ENCODE measurements at regions of chr10 and their contacts with region 1.

Region 1: DNA sequence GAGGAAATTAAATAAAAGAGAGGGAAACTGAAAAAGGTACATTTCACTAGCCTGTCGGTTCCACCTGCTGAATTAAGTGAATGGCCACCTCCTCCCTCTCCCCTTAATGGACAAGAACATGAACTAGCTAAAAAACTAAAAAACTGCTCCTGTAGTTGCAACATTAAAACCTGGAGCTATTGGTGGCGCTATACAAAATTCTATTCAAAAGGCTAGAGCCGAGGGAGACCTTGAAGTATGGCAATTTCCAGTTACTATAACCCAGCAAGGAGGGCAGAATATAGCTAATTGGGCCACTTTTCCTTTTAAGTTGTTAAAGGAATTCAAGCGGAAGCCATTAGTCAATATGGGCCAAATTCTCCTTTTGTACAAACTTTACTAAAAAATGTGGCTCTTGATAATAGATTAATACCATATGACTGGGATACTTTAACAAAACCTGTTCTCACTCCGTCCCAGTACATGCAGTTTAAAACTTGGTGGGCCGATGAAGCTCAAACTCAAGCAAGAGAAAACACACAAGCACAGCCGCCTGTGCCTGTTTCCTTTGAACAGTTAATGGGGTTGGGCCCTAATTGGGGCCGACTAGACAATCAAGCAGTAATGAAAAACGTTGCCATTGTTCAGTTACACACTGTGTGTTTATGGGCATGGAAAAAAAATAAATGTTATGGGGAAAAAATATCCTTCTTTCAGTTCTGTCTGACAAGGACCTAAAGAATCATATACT is 6.5 kb upstream of the CHST3 start:
- DNase-seq: no peak
- ATAC-seq: no peak
- H3K4me3 Mint-ChIP-seq: no peak overlapping the region
- H3K27ac Mint-ChIP-seq: no peak overlapping the region
- H3K4me1 Mint-ChIP-seq: peaks cover 4% of the 10 kb centered on the region
- H3K27me3 Mint-ChIP-seq: peaks cover 13% of the 10 kb centered on the region

Region 2: DNA sequence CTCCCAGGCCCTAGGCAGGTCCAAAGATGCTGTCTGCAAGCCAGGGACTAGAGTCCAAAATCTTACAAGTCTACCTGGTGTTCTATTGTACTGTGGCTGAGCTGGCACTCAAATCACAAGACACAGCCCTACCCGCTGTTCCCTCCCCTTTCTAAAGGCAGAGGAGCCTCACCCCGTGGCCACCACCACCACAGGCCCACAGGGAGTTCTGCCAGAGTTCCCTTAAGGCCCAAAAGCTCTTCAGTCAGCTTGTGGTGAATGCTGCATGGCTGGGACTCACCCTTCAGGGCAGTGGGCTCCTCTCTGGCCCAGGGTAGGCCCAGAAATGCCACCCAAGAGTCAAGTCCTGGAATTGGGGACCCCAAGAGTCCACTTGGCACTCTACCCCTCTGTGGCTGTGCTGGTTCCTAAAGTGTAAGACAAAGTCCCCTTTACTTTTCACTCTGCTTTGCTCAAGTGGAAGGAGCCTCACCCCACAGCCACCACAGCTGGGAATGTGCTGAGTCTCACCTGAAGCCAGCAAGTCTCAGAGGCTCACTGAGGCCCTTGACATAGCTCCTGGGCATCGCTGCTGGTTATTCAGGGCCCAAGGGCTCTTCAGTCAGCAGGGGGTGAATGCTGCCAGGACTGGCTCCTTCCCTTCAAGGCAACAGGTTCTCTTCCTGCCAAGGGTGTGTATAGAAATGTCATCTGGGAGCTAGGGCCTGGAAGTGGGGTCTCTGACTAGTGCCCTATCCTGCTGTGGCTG is 57.9 kb before region 1 on chr10:
- CTCF ChIA-PET with region 1: interaction called, 21 read pairs
- POLR2A ChIA-PET with region 1: no interaction called
- intact Hi-C with region 1: no loop called
- DNase-seq: no peak
- ATAC-seq: no peak
- H3K4me3 Mint-ChIP-seq: no peak overlapping the region
- H3K27ac Mint-ChIP-seq: no peak overlapping the region
- H3K4me1 Mint-ChIP-seq: no peaks in the 10 kb centered on the region
- H3K27me3 Mint-ChIP-seq: no peaks in the 10 kb centered on the region

Region 3: DNA sequence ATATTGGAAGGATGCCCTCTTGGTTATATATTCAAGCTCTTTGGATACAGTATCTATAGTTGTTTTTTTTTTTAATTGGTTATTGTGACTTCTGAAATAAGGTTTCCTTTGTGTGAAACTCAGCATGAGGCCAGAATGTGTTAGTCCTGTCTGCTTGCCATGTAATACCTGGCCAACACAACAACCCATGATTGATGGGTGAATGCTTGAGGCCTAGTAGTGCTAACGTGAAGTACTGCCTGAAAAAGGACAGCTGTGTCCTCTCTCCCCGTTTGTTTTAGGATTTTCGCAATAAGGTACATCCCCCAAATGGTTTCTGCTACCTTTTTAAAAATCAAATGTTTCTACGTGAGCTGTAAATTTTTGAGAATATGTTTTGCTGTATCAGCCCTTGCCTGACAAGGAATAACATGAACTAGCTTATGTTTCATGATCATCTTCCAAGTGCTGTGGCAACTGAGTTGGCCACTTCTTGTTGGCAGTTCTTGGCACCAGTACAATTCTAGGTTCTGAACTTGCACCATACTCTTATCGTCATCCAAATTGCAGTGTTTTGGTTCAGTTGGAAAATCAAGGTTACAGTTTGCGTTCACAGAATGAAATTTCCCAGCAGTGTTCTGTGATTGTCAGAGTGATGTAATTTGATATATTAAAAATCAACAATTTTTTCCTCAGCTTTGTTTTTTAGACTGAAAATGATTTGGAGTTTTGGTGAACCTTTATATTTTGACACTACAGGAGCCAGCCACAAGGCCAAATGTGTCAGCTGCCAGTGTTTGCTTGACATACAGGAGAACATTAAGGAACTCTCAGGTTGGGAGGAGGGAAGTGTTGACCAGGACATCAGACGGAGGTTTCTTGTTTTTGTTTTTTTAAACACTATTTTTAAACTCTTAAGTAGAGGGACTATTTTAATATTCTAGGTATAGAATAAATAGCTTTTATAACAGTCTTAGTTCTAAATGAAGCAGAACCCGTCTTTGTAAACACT is 271.8 kb after region 1 on chr10:
- CTCF ChIA-PET with region 1: no interaction called
- POLR2A ChIA-PET with region 1: no interaction called
- intact Hi-C with region 1: loop called in 1 of 2 experiments (anchors 5 kb)
- DNase-seq: no peak
- ATAC-seq: no peak
- H3K4me3 Mint-ChIP-seq: no peak overlapping the region
- H3K27ac Mint-ChIP-seq: peak overlapping the region; percentile 75
- H3K4me1 Mint-ChIP-seq: peaks cover 38% of the 10 kb centered on the region
- H3K27me3 Mint-ChIP-seq: no peaks in the 10 kb centered on the region

Measured in activated CD4-positive, alpha-beta T cell treated with anti-CD3 and anti-CD28 coated beads for 36 hours (primary cell).